Activated CD8-positive, alpha-beta memory T cell treated with anti-CD3 and anti-CD28 coated beads, Interleukin-2, amount 10 ng/mL, durations not matched to agents 7 days and 5 days (primary cell): ENCODE measurements at regions of chr4 and their contacts with region 1.

Region 1: DNA sequence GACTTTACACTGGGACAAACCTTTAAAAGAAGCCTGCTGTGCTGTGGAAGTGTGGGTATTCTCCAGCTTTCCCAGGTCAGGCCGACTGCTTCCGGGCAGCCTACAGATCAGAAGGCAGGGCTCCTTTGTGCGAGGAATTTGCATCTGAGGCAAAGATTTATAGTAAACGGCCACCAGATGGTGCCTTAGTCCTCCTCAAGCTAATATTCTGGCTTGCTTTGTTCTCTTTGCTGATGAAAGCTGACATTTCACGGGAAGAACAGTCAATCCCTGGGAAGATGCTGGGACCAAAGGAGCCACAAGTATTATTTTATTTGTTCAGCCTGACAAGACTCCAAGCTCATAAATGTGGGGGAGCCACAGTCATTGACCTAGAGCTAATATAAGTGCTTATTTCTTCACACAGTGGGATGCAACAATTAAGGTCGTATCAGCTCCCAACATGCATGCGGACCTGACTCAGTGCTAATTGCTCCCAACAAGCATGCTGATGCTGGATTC is 120.7 kb upstream of the TRIM2 start:
- DNase-seq: peak; percentile 55
- ATAC-seq: peak; percentile 64
- H3K4me3 Mint-ChIP-seq: no peak overlapping the region
- H3K27ac Mint-ChIP-seq: no peak overlapping the region
- H3K4me1 Mint-ChIP-seq: peaks cover 20% of the 10 kb centered on the region
- H3K27me3 Mint-ChIP-seq: peaks cover 57% of the 10 kb centered on the region

Region 2: DNA sequence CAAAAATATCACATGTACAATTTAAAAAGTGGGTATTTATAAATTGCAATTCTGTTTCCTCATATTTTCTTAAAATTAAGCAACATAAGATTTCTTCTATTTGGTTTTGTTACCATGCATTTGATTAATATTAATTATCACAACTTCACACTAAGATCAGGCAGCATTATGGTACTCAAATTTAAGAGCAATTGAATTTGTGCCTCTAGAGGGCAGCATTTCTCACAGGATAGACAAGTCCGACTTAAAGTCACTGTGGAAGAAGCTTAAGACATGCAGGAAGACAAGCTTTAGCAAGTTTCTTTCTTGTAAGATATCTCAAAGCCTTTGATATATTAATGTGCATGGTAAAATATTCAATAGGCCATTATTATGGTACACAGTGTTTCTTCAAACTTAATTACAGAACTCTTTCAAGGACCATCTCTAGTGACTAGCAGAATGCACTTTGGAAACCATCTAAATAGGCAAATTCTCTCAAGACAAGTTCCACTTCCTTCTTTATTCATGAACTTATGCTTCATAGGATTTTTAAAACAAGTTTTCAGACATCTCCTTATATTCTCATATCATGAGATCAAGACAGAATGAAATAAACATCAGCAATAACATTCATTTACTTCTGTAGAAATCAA is 582.6 kb before region 1 on chr4:
- CTCF ChIA-PET with region 1: no interaction called
- DNase-seq: peak; percentile 69
- ATAC-seq: peak; percentile 81
- H3K4me3 Mint-ChIP-seq: no peak overlapping the region
- H3K27ac Mint-ChIP-seq: no peak overlapping the region
- H3K4me1 Mint-ChIP-seq: peaks cover 26% of the 10 kb centered on the region
- H3K27me3 Mint-ChIP-seq: no peaks in the 10 kb centered on the region

Region 3: GRCh38 chr4:152655272-152656129 is 428.0 kb before region 1 on chr4:
- CTCF ChIA-PET with region 1: no interaction called
- DNase-seq: no peak
- ATAC-seq: no peak
- H3K4me3 Mint-ChIP-seq: no peak overlapping the region
- H3K27ac Mint-ChIP-seq: no peak overlapping the region
- H3K4me1 Mint-ChIP-seq: peaks cover 18% of the 10 kb centered on the region
- H3K27me3 Mint-ChIP-seq: no peaks in the 10 kb centered on the region

Region 4: DNA sequence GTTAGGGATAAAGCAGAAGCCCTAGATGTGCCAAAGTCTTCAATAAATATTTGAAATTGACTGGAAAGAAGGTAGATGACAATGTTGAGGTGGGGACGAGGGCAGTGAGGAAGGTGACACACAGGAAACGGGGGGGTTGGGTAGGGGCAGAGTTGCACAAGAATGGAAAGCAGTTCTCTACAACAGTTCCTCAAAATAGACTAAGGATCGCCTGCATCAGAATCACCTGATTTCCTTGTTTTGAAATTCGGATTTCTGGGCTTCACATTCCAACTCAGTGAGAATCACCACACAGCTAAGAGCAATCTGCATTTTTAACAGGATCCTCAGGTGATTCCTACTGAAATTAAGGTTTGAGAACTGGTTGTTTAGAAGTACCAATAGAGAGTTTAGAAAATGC is 233.1 kb before region 1 on chr4:
- CTCF ChIA-PET with region 1: interaction called, 53 read pairs
- DNase-seq: peak; percentile 50
- ATAC-seq: peak; percentile 23
- H3K4me3 Mint-ChIP-seq: no peak overlapping the region
- H3K27ac Mint-ChIP-seq: peak overlapping the region; percentile 9
- H3K4me1 Mint-ChIP-seq: peaks cover 14% of the 10 kb centered on the region
- H3K27me3 Mint-ChIP-seq: no peaks in the 10 kb centered on the region

Region 5: DNA sequence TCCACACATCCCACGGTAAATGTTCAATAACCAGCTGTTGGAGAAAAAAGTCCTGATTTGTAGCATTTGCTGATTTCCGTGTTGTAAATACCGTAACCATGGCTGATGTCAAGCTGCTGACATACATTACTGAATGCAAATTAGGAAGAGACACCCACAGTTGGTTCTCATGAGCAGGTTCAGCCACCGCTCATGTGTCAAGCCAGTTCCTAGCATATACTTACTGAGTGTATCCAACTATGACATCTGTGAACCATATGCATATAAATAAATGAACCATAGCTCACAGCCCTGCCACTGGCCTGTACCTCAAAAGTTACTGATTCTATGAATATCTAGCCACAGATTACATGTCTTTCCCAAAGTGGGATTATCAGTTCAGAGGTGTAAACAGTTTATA is 117.9 kb before region 1 on chr4:
- CTCF ChIA-PET with region 1: no interaction called
- DNase-seq: no peak
- ATAC-seq: no peak
- H3K4me3 Mint-ChIP-seq: no peak overlapping the region
- H3K27ac Mint-ChIP-seq: no peak overlapping the region
- H3K4me1 Mint-ChIP-seq: no peaks in the 10 kb centered on the region
- H3K27me3 Mint-ChIP-seq: peaks cover 11% of the 10 kb centered on the region

Region 6: DNA sequence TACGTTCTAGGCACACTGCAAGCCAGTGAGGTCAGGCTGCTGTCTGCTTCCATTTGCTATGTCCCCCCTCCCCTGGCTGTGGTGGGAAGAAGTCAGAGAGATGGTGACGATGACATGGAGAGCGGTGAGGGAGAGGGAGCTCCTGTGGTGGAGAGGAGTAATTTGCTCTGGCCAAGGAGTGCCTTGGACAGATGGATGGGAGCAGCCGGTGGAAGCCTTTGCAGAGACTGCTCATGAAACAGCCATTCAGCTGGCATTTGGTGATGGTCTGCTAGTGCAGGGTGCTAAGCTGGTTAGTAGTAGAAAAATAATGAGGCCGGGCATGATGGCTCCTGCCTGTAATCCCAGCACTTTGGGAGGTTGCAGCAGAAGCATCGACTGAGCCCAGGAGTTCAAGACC is 23.3 kb before region 1 on chr4:
- CTCF ChIA-PET with region 1: no interaction called
- DNase-seq: no peak
- ATAC-seq: no peak
- H3K4me3 Mint-ChIP-seq: no peak overlapping the region
- H3K27ac Mint-ChIP-seq: no peak overlapping the region
- H3K4me1 Mint-ChIP-seq: no peaks in the 10 kb centered on the region
- H3K27me3 Mint-ChIP-seq: peaks cover 37% of the 10 kb centered on the region

Region 7: DNA sequence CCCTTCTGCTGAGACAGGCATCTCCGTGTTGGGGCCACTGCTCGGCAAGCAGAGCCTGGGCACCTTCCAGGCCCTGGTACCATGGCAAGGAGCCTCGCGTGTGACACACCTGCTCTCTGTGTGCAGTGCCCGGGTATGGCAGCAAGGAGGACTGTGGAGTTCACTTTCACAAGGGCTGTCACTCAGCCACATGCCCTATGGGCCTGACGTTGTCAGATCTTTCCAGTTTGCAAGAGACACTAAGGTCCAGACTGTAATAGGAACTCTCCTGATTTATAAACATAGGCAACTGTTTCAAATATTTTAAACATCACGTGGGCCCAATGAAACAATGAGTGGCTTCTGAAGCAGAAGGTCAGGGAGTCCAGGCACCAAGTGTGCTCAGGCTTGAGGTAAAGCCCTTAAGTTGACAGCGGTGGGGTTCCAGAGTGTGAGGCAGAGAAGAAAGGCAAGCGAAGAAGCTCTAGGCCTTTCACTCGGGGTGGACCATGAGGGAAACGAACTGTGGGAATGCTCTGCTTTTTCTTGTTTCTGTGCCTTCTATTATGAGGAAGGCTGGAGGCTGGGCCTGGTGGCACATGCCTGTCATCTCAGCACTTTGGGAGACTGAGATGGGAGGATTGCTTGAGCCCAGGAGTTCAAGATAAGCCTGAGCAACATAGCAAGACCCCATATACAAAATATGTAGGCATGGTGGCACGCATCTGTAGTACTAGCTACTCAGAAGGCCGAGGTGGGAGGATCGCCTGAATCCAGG is 12.1 kb after region 1 on chr4:
- CTCF ChIA-PET with region 1: interaction called, 21 read pairs
- DNase-seq: no peak
- ATAC-seq: no peak
- H3K4me3 Mint-ChIP-seq: no peak overlapping the region
- H3K27ac Mint-ChIP-seq: no peak overlapping the region
- H3K4me1 Mint-ChIP-seq: no peaks in the 10 kb centered on the region
- H3K27me3 Mint-ChIP-seq: peaks cover 16% of the 10 kb centered on the region

Region 8: GRCh38 chr4:153115322-153116290 is 32.1 kb after region 1 on chr4:
- CTCF ChIA-PET with region 1: interaction called, 26 read pairs
- DNase-seq: peak; percentile 85
- ATAC-seq: peak; percentile 71
- H3K4me3 Mint-ChIP-seq: no peak overlapping the region
- H3K27ac Mint-ChIP-seq: peak overlapping the region; percentile 70
- H3K4me1 Mint-ChIP-seq: peaks cover 11% of the 10 kb centered on the region
- H3K27me3 Mint-ChIP-seq: peaks cover 38% of the 10 kb centered on the region

Region 9: DNA sequence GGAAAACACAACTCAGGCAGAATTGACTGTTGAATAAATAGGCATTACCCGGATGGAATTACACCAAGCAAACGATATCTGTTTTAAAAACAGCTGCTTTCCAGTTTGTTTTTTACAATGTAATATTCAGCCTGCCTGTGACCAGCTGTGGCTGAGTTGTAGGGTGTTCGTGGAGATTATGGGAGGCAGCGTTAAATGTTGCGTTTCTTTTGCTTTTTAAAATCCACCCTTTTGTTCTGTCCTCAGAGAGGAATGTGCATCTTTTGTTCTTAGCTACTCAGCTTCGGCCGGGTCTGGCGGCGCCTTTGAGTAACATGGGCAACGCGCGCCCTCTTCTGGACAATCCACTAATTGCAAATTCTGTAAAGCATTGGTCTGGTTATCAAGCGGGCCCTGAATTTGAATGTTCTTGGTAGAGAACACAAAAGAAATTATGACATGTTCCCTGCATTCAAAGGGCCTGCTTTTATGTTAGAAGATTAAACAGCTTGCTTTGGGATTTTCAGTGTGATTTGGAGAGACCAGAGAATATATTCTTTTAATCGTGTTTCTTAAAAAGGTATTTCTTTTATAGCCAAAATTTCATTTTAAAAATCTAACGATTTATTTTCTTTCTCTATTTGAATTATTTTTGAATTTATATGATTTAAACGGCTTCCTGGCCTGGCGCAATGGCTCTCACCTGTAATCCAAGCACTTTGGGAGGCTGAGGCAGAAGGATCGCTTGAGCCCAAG is 44.4 kb after region 1 on chr4:
- CTCF ChIA-PET with region 1: interaction called, 202 read pairs
- DNase-seq: peak; percentile 85
- ATAC-seq: peak; percentile 80
- H3K4me3 Mint-ChIP-seq: no peak overlapping the region
- H3K27ac Mint-ChIP-seq: no peak overlapping the region
- H3K4me1 Mint-ChIP-seq: no peaks in the 10 kb centered on the region
- H3K27me3 Mint-ChIP-seq: peaks cover 57% of the 10 kb centered on the region